ENCODE measurements at regions of chr22 and their contacts with region 1.

Region 1: DNA sequence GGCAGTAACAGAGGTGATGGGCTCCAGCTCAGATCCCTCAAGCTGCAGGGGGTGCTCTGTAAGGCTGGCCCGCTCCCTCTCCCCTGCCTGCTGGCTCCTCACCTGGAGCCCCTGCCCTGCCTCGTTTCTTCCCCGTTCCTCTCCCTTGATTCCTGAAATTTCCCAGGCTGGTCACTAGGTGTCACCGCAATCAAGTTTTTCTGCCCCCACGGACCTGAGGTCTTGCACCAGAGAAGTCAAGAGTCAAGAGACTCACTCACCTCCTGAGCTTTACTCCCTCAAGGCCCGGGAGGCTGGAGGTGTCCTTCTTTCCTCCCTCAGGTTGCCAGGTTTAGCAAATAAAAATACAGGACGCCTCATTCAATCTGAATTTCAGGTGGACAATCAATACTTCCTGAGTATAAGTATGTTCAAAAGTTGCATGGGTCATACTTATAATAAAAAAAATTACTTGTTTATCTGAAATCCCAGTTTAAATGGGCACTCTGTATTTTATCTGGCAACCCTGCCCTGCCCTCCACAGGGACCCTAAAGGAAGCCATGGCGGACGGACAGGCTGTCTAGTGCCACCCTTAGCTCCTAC is 69.2 kb downstream of the SCUBE1 start:
- DNase-seq: peak in 1 of 2 donors; percentile 21
- ATAC-seq: peak; percentile 55 to 78
- H3K4me3 ChIP-seq: no peak overlapping the region
- H3K27ac ChIP-seq: no peak overlapping the region
- H3K4me1 ChIP-seq: no peaks in the 10 kb centered on the region
- H3K27me3 ChIP-seq: no peaks in the 10 kb centered on the region
- CTCF ChIP-seq: peak; percentile 24 to 61 (median 47)
- POLR2A ChIP-seq: no peak

Region 2: DNA sequence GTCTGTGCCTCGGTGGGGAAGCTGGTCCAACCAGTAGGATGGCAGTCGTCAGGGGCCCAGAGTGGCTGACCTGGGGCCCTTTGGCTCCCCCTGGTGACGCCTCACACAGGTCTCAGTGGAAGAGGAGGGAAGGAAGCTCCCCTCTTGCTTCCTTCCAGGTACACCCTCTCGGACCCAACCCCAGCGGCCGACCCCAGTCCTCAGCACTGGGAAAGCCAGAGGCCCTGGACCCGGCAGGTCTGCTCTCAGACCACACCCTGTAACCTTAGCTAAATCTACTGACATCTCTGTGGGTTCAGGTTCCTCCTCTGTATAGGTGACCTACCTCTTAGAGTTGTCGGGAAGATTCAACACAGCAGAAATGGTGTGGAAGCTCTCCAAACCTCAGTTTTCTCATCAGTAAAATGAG is 72.5 kb after region 1 on chr22:
- in situ Hi-C with region 1: loop called in 3 of 4 experiments (anchors 10 kb)
- intact Hi-C with region 1: loop called (anchors 2 kb)
- DNase-seq: peak in 1 of 2 donors; percentile 21
- ATAC-seq: no peak
- H3K4me3 ChIP-seq: no peak overlapping the region
- H3K27ac ChIP-seq: no peak overlapping the region
- H3K4me1 ChIP-seq: no peaks in the 10 kb centered on the region
- H3K27me3 ChIP-seq: peaks cover 26 to 46% (median 27%) of the 10 kb centered on the region in 3 donors
- CTCF ChIP-seq: peak in 4 of 5 experiments; percentile 37 to 58 (median 52)
- POLR2A ChIP-seq: no peak

Region 3: DNA sequence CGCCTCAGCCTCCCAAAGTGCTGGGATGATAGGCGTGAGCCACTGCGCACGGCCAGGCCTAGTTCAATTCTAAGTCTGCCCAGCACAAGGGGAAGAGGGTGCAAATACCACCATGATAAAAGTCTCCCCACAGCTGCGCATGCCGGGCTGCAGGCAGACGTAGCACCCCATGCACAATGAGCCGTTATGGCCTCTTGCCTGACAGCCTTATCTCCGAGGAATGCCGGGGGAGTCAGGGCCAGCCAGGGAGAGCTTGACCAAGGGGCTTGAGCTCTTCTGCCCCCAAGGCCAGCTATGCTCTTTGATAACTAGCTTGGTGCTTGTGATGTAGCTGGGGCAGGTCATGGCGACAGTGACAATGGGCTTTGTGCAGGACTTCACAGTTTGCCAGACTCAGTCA is 82.9 kb after region 1 on chr22:
- in situ Hi-C with region 1: loop called in 1 of 4 experiments (anchors 10 kb)
- intact Hi-C with region 1: no loop called
- DNase-seq: no peak
- ATAC-seq: no peak
- H3K4me3 ChIP-seq: no peak overlapping the region
- H3K27ac ChIP-seq: no peak overlapping the region
- H3K4me1 ChIP-seq: no peaks in the 10 kb centered on the region
- H3K27me3 ChIP-seq: peaks cover 0 to 3% (median 2%) of the 10 kb centered on the region in 3 donors
- CTCF ChIP-seq: no peak
- POLR2A ChIP-seq: no peak